AG04450 (cell line): ENCODE measurements at regions of chr1 and their contacts with region 1.

Region 1: GRCh38 chr1:28160782-28161266 is 15.7 kb downstream of the PTAFR start:
- DNase-seq: peak; percentile 65
- H3K4me3 ChIP-seq: no peak overlapping the region
- H3K27ac ChIP-seq: peak overlapping the region; percentile 89
- H3K27me3 ChIP-seq: no peaks in the 10 kb centered on the region
- CTCF ChIP-seq: no peak

Region 2: DNA sequence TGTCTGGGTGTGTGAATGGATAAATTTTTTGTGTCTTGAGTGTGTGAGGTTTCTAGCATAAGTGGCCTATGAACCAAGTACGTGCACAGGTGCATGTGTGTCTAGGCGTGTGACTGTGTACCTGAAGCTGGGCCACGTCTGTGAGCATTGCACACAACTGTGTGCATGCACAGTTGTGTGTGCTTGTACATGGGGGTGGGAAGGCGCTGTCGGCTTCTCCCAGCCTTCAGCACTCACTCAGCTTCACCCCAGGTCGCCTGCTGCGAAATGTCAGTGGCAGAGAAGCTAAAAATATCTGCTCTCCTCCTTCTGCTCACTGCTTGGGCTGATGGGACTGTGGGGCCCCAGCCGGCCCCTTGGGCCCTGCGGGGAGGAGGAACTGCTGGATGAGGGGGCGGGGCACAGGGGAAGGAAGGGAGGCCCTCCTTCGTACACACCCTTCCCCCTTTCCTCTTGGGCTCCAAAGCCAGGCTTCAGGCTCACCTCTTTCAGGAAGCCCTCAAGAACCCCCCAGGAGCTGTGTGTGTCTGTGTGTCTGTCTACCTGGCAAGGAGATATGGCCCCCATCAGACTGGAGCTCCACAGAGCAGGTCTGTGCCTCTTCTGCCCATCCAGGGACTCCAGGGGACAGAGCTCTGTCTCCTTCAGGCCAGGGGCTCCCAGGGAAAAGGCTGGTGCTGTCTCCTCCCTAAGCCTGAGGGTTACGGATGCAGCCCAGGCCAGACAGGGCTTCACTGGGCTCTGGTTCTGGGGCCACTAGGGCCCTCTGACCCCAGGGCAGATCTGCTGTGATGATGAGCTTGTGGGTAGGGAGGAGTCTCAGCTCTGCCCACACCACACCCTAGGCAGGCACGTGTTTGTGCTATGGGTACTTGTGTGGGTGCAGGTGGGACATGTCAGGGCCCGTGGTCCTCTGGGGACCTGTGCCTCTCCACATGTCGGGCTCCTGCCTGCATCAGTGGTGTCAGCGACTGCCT is 635.2 kb before region 1 on chr1:
- CTCF ChIA-PET with region 1: no interaction called
- POLR2A ChIA-PET with region 1: no interaction called
- DNase-seq: no peak
- H3K4me3 ChIP-seq: peak overlapping the region; percentile 21
- H3K27ac ChIP-seq: peak overlapping the region; percentile 11
- H3K27me3 ChIP-seq: no peaks in the 10 kb centered on the region
- CTCF ChIP-seq: no peak

Region 3: GRCh38 chr1:28088168-28088961 is 72.5 kb before region 1 on chr1 and contains the start of gene EYA3:
- CTCF ChIA-PET with region 1: interaction called, 12 read pairs
- POLR2A ChIA-PET with region 1: interaction called, 8 read pairs
- DNase-seq: peak; percentile 94
- H3K4me3 ChIP-seq: peak within 1 kb of the TSS; percentile 80
- H3K27ac ChIP-seq: peak within 1 kb of the TSS; percentile 87
- H3K27me3 ChIP-seq: no peaks in the 10 kb centered on the region
- CTCF ChIP-seq: no peak
- polyA plus RNA-seq, gene EYA3: 15.4 and 17.0 TPM in 2 replicates

Region 4: DNA sequence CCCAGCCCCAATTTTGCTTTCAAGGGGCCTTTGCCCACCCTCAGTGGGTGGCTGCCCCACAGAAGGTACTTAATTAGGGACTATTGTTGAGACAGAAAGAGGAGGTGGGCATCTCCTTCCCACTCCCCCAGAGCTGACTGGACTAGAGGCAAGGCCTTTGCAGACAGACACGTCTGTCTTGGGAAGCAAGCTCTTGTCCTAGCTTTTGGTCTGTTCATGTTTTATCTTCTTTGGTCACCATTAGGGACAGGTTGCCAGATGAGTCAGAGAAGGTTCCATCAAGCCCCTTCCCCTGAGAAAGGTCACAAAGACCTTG is 12.0 kb before region 1 on chr1:
- CTCF ChIA-PET with region 1: no interaction called
- POLR2A ChIA-PET with region 1: interaction called, 17 read pairs
- DNase-seq: no peak
- H3K4me3 ChIP-seq: no peak overlapping the region
- H3K27ac ChIP-seq: no peak overlapping the region
- H3K27me3 ChIP-seq: no peaks in the 10 kb centered on the region
- CTCF ChIP-seq: no peak

Region 5: GRCh38 chr1:28235755-28236655 is 75.2 kb after region 1 on chr1 and contains the start of gene ATP5IF1:
- CTCF ChIA-PET with region 1: no interaction called
- POLR2A ChIA-PET with region 1: no interaction called
- DNase-seq: peak; percentile 96
- H3K4me3 ChIP-seq: peak within 1 kb of the TSS; percentile 100
- H3K27ac ChIP-seq: peak within 1 kb of the TSS; percentile 65
- H3K27me3 ChIP-seq: no peaks in the 10 kb centered on the region
- CTCF ChIP-seq: no peak
- polyA plus RNA-seq, gene ATP5IF1: 151 and 189 TPM in 2 replicates

Region 6: GRCh38 chr1:28248283-28249012 is 87.6 kb after region 1 on chr1:
- CTCF ChIA-PET with region 1: no interaction called
- POLR2A ChIA-PET with region 1: no interaction called
- DNase-seq: peak; percentile 64
- H3K4me3 ChIP-seq: peak overlapping the region; percentile 24
- H3K27ac ChIP-seq: peak overlapping the region; percentile 76
- H3K27me3 ChIP-seq: no peaks in the 10 kb centered on the region
- CTCF ChIP-seq: peak; percentile 94